ENCODE measurements at regions of chr2 and their contacts with region 1.

Region 1: DNA sequence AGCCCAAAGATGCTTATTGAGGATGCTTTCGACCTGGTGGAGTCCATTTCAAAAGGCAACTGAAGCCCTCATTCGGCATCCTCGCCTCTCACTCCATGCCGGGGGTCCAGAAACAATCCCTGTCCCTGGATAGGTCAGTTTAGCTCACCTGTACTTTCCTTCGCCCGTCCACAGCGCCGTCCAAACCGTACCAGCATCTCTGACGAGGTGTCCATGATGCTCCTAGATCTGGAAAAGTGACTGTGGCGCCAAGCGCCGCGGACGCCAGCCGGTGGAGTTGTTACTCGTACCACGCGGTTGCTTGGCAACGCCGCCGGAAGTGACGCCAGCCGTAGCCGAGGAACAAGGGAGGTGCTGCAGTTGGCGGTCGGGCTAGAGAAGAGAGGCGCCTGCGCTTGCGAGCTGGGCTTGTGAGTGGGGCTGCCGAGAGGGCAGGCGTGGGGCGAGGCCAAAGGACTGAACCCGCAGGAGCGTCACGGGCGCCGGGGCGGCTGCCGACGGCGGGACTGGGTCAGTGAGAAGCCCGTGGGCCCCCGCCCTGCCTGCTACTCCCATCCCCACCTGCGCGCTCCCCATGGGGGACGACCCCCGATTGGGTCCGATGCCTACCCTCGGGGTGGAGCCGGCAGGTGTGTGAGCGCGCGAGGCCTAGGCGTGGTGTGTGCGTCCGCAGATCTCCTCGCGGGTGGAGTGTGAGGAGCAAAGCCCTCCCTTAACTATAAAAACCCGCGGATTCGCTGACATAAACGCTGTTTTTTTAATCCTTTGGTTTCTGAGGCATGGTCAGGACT is at the starts of genes CFAP210 and PHOSPHO2:
- DNase-seq: peak; percentile 100
- ATAC-seq: peak; percentile 100
- total RNA-seq, gene CFAP210: 0.11 TPM
- total RNA-seq, gene PHOSPHO2: 3.6 TPM

Region 2: GRCh38 chr2:169584005-169584877 is 110.1 kb before region 1 on chr2 and contains the start of gene PPIG:
- intact Hi-C with region 1: loop called (anchors 5 kb)
- DNase-seq: peak; percentile 95
- ATAC-seq: peak; percentile 95
- total RNA-seq, gene PPIG: 34.7 TPM

Region 3: GRCh38 chr2:169734169-169734847 is 40.0 kb after region 1 on chr2:
- intact Hi-C with region 1: loop called (anchors 2 kb)
- DNase-seq: no peak
- ATAC-seq: peak; percentile 20

Region 4: DNA sequence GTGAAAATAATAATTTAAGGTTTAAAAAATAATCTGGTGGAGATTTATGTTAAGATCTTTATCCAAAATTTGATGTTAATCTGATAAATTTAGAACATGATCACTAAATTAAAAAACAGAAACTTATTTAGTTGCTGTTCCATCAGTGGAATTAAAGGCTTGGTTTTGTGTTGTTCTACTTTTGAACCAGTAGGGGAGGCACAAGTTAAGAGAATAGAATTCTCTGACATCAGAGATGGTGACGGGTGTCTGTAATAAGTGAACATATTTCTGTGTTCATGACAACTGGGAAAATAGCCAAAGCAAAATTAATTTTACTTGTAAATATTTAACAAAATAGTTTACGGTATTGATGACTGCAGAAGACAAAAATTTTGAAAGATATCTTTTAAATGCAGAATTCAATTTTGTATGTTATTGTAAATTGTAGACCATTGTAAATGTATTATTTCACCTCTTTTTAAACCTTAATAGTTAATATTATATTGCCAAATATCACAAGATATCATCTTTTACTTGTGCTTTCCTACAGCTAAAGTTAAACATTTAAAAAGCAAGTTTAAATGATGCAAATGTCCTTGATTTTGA is 238.9 kb after region 1 on chr2:
- intact Hi-C with region 1: no loop called
- DNase-seq: no peak
- ATAC-seq: no peak

Measured in Right ventricle myocardium inferior (tissue), 1 donor.